ENCODE measurements at regions of chr4 and their contacts with region 1.

Region 1: DNA sequence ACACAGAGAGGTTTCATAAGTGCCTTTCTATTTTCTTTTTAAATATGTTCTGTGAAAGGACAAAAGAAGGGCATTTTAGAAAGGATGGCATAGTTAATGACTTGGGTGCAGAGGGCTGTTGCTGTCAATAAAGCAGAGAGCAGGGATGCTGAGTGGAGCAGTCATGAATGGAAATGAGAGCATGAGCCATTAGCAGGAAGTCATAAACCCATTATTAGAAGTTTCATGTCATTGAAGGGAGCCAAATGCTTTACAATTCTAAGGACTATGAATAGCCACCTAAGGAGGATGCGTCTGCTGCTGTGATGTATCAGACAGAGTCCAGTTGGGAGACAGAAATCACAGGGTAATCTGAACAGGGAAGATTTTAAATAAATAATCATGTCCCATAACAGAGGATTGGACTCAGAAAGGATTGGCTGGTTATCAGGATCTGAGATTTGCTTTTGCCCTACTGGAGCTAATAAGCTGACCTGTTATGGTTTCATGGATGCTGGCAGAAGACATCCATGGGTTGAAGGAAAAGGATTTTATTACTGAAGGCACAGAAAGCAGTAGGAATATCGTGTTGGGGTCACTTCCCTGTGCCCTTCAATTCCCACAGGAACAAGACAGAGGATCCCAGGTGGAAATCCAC is 47.5 kb upstream of the WDR19 start:
- DNase-seq: no peak
- H3K4me3 Mint-ChIP-seq: no peak overlapping the region
- H3K27ac Mint-ChIP-seq: peak overlapping the region; percentile 76
- H3K4me1 Mint-ChIP-seq: no peaks in the 10 kb centered on the region
- H3K27me3 Mint-ChIP-seq: no peaks in the 10 kb centered on the region
- CTCF ChIP-seq: no peak

Region 2: GRCh38 chr4:38894340-38894982 is 240.3 kb before region 1 on chr4:
- CTCF ChIA-PET with region 1: interaction called, 93 read pairs
- POLR2A ChIA-PET with region 1: no interaction called
- intact Hi-C with region 1: no loop called
- DNase-seq: no peak
- H3K4me3 Mint-ChIP-seq: no peak overlapping the region
- H3K27ac Mint-ChIP-seq: no peak overlapping the region
- H3K4me1 Mint-ChIP-seq: peaks cover 6% of the 10 kb centered on the region
- H3K27me3 Mint-ChIP-seq: no peaks in the 10 kb centered on the region
- CTCF ChIP-seq: no peak

Region 3: GRCh38 chr4:38907696-38908270 is 227.0 kb before region 1 on chr4:
- CTCF ChIA-PET with region 1: interaction called, 93 read pairs
- POLR2A ChIA-PET with region 1: interaction called, 6 read pairs
- intact Hi-C with region 1: loop called (anchors 1 kb)
- DNase-seq: no peak
- H3K4me3 Mint-ChIP-seq: no peak overlapping the region
- H3K27ac Mint-ChIP-seq: no peak overlapping the region
- H3K4me1 Mint-ChIP-seq: no peaks in the 10 kb centered on the region
- H3K27me3 Mint-ChIP-seq: no peaks in the 10 kb centered on the region
- CTCF ChIP-seq: no peak

Region 4: GRCh38 chr4:39103291-39103690 is 31.5 kb before region 1 on chr4:
- CTCF ChIA-PET with region 1: interaction called, 11 read pairs
- POLR2A ChIA-PET with region 1: interaction called, 4 read pairs
- intact Hi-C with region 1: no loop called
- DNase-seq: no peak
- H3K4me3 Mint-ChIP-seq: no peak overlapping the region
- H3K27ac Mint-ChIP-seq: no peak overlapping the region
- H3K4me1 Mint-ChIP-seq: peaks cover 15% of the 10 kb centered on the region
- H3K27me3 Mint-ChIP-seq: no peaks in the 10 kb centered on the region
- CTCF ChIP-seq: no peak

Measured in MCF 10A (cell line).